Activated CD4-positive, alpha-beta T cell treated with anti-CD3 and anti-CD28 coated beads for 36 hours (primary cell): ENCODE measurements at regions of chr19 and their contacts with region 1.

Region 1: DNA sequence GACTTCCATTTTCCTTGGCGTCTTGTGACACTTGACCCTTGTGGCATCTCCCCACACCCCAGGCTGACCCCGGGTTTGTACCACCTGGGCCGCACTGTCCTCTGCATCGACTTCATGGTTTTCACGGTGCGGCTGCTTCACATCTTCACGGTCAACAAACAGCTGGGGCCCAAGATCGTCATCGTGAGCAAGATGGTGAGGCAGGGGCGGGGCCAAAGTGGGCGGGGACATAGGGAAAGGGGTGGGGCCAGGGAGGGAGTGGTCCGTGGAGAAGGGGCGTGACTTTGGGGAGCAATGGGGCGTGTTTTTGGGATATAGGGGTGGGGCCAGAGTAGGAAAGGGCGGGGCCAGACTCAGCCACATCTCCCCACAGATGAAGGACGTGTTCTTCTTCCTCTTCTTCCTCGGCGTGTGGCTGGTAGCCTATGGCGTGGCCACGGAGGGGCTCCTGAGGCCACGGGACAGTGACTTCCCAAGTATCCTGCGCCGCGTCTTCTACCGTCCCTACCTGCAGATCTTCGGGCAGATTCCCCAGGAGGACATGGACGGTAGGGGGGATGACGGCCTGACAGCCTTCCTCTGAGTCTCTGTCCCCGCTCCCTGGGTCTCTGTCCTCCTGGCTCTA is 42.8 kb downstream of the TRPM4 start:
- DNase-seq: peak; percentile 63
- ATAC-seq: peak; percentile 78
- H3K4me3 Mint-ChIP-seq: no peak overlapping the region
- H3K27ac Mint-ChIP-seq: no peak overlapping the region
- H3K4me1 Mint-ChIP-seq: peaks cover 3% of the 10 kb centered on the region
- H3K27me3 Mint-ChIP-seq: peaks cover 1% of the 10 kb centered on the region

Region 2: DNA sequence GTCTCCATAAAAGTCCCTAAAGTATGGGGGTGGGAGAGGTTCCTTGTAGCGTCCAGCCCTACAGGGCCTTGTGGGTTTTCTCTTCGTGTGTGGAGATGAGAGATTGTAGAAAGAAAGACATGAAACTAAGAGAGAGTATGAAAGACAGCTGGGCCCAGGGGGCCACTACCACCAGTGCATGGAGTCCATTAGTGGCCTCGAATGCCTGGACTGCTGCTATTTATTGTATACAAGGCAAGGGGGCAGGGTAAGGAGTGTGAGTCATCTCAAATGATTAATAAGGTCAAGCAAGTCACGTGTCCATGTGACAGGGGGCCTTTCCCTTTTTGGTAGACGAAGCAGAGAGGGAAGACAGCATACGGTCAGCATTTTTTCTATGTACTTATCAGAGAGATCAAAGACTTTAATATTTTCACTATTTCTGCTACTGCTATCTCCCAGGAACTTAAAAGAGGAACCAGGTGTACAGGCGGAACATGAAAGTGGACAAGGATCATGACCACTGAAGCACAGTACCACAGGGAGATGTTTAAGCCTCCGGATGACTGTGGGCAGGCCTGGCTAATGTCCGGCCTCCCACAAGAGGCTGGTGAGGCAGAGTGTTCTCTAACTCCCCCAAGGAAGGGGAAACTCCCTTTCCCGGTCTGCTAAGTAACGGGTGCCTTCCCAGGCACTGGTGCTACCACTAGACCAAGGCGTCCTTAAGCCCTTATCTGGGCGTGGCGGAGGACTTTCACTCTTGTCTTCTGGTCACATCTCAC is 419.5 kb before region 1 on chr19:
- CTCF ChIA-PET with region 1: no interaction called
- POLR2A ChIA-PET with region 1: no interaction called
- intact Hi-C with region 1: loop called in 1 of 2 experiments (anchors 10 kb)
- DNase-seq: no peak
- ATAC-seq: no peak
- H3K4me3 Mint-ChIP-seq: no peak overlapping the region
- H3K27ac Mint-ChIP-seq: no peak overlapping the region
- H3K4me1 Mint-ChIP-seq: peaks cover 2% of the 10 kb centered on the region
- H3K27me3 Mint-ChIP-seq: peaks cover 9% of the 10 kb centered on the region

Region 3: GRCh38 chr19:48819366-48819816 is 381.0 kb before region 1 on chr19:
- CTCF ChIA-PET with region 1: no interaction called
- POLR2A ChIA-PET with region 1: interaction called, 11 read pairs
- intact Hi-C with region 1: no loop called
- DNase-seq: no peak
- ATAC-seq: no peak
- H3K4me3 Mint-ChIP-seq: no peak overlapping the region
- H3K27ac Mint-ChIP-seq: no peak overlapping the region
- H3K4me1 Mint-ChIP-seq: peaks cover 5% of the 10 kb centered on the region
- H3K27me3 Mint-ChIP-seq: no peaks in the 10 kb centered on the region

Region 4: GRCh38 chr19:48999481-49000325 is 200.6 kb before region 1 on chr19:
- CTCF ChIA-PET with region 1: interaction called, 7 read pairs
- POLR2A ChIA-PET with region 1: no interaction called
- intact Hi-C with region 1: loop called (anchors 5 kb)
- DNase-seq: peak; percentile 86
- ATAC-seq: peak; percentile 90
- H3K4me3 Mint-ChIP-seq: no peak overlapping the region
- H3K27ac Mint-ChIP-seq: no peak overlapping the region
- H3K4me1 Mint-ChIP-seq: peaks cover 18% of the 10 kb centered on the region
- H3K27me3 Mint-ChIP-seq: no peaks in the 10 kb centered on the region

Region 5: DNA sequence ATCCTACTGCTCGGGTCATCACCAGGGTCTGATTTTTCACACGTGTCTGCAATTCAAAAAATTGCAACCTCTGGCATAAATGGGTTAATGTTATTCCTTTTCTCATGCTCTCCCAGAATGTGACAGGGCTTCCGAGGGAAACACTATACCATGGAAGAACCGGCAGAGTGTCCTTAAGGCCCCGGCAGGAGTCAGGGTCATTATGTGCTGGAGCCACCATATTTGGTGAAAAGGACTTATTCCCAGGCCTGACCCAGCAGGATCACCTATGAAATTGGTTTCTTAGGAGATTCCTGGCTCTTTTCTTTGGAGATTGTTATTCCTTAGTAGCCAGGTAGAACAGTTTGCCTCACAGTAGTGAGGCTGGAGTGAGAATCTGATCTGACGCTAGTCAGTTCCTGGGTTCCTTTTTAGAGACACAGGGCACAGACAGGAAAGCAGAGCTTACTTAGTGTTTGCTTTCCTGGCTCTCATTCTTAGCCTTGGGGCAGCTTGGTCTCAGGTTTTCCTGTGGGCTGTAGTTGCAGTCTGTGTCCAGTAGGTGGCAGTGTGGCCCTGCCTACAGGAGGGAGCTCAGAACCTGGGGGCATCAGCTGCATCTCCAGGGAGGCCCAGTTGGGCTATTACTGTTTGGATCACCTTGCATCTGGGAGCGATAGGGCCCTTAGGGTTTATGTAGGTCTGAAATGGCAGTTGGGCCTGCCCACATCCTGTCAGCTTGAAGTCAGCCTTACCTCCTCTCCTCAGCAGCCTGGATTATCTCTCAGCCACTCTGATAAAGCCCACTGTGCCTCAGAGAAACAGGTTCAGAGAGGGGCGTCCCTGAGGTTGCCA is 102.7 kb before region 1 on chr19:
- CTCF ChIA-PET with region 1: interaction called, 14 read pairs
- POLR2A ChIA-PET with region 1: interaction called, 4 read pairs
- intact Hi-C with region 1: loop called (anchors 1 to 2 kb)
- DNase-seq: peak; percentile 82
- ATAC-seq: peak; percentile 86
- H3K4me3 Mint-ChIP-seq: no peak overlapping the region
- H3K27ac Mint-ChIP-seq: no peak overlapping the region
- H3K4me1 Mint-ChIP-seq: no peaks in the 10 kb centered on the region
- H3K27me3 Mint-ChIP-seq: no peaks in the 10 kb centered on the region

Region 6: GRCh38 chr19:49186108-49186507 is 14.2 kb before region 1 on chr19:
- CTCF ChIA-PET with region 1: interaction called, 23 read pairs
- POLR2A ChIA-PET with region 1: no interaction called
- intact Hi-C with region 1: no loop called
- DNase-seq: no peak
- ATAC-seq: no peak
- H3K4me3 Mint-ChIP-seq: no peak overlapping the region
- H3K27ac Mint-ChIP-seq: no peak overlapping the region
- H3K4me1 Mint-ChIP-seq: peaks cover 7% of the 10 kb centered on the region
- H3K27me3 Mint-ChIP-seq: peaks cover 5% of the 10 kb centered on the region

Region 7: GRCh38 chr19:49255674-49256073 is 55.3 kb after region 1 on chr19:
- CTCF ChIA-PET with region 1: no interaction called
- POLR2A ChIA-PET with region 1: no interaction called
- intact Hi-C with region 1: no loop called
- DNase-seq: no peak
- ATAC-seq: no peak
- H3K4me3 Mint-ChIP-seq: no peak overlapping the region
- H3K27ac Mint-ChIP-seq: no peak overlapping the region
- H3K4me1 Mint-ChIP-seq: no peaks in the 10 kb centered on the region
- H3K27me3 Mint-ChIP-seq: peaks cover 34% of the 10 kb centered on the region